Activated CD4-positive, alpha-beta T cell treated with anti-CD3 and anti-CD28 coated beads for 36 hours (primary cell): ENCODE measurements at regions of chr18 and their contacts with region 1.

Region 1: DNA sequence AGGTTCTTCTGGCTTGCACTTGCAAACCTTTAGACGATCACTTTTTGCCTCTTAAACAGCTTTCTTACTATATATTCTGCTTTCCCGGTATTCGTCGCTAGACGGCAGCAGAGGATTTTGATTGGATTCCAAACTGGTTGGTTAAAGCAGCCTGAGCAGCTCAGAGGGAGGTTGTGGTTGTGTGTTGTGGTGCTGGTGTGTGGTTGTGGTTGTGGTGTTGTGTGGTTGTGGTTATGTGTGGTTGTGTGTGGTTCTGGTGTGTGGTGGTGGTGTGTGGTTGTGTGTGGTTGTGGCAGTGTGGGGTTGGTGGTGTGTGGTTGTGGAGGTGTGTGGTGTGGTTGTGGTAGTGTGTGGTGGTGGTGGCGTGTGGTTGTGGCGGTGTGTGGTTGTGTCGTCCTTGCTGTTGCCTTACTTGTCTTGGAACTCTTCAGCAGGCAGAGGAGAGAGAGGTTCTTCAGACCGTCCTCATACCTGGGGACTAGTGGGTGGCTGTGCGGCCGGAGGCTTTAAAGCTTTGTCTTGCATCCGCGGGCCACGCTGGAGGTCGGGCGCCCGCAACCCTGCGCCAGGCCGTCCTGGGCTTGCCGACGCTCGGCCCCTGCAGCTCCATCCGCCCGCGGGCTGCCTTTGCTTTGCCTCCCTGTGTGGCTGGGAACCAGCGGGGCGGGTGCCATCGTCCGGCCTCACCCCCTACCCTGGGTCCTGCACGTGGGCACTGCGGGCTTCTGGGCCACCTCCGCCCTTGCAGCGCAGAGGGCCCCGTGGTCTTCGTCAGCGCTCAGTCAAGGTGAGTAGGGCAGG is 190.8 kb downstream of the ARHGAP28 start:
- DNase-seq: peak; percentile 57
- ATAC-seq: no peak
- H3K4me3 Mint-ChIP-seq: peak overlapping the region; percentile 12
- H3K27ac Mint-ChIP-seq: peak overlapping the region; percentile 53
- H3K4me1 Mint-ChIP-seq: no peaks in the 10 kb centered on the region
- H3K27me3 Mint-ChIP-seq: peaks cover 8% of the 10 kb centered on the region

Region 2: GRCh38 chr18:6659963-6660725 is 260.2 kb before region 1 on chr18:
- CTCF ChIA-PET with region 1: no interaction called
- POLR2A ChIA-PET with region 1: no interaction called
- intact Hi-C with region 1: no loop called
- DNase-seq: no peak
- ATAC-seq: no peak
- H3K4me3 Mint-ChIP-seq: no peak overlapping the region
- H3K27ac Mint-ChIP-seq: no peak overlapping the region
- H3K4me1 Mint-ChIP-seq: no peaks in the 10 kb centered on the region
- H3K27me3 Mint-ChIP-seq: no peaks in the 10 kb centered on the region

Region 3: GRCh38 chr18:7000484-7001096 is 80.3 kb after region 1 on chr18:
- CTCF ChIA-PET with region 1: no interaction called
- POLR2A ChIA-PET with region 1: no interaction called
- intact Hi-C with region 1: loop called in 1 of 2 experiments (anchors 2 kb)
- DNase-seq: no peak
- ATAC-seq: no peak
- H3K4me3 Mint-ChIP-seq: no peak overlapping the region
- H3K27ac Mint-ChIP-seq: no peak overlapping the region
- H3K4me1 Mint-ChIP-seq: no peaks in the 10 kb centered on the region
- H3K27me3 Mint-ChIP-seq: no peaks in the 10 kb centered on the region

Region 4: DNA sequence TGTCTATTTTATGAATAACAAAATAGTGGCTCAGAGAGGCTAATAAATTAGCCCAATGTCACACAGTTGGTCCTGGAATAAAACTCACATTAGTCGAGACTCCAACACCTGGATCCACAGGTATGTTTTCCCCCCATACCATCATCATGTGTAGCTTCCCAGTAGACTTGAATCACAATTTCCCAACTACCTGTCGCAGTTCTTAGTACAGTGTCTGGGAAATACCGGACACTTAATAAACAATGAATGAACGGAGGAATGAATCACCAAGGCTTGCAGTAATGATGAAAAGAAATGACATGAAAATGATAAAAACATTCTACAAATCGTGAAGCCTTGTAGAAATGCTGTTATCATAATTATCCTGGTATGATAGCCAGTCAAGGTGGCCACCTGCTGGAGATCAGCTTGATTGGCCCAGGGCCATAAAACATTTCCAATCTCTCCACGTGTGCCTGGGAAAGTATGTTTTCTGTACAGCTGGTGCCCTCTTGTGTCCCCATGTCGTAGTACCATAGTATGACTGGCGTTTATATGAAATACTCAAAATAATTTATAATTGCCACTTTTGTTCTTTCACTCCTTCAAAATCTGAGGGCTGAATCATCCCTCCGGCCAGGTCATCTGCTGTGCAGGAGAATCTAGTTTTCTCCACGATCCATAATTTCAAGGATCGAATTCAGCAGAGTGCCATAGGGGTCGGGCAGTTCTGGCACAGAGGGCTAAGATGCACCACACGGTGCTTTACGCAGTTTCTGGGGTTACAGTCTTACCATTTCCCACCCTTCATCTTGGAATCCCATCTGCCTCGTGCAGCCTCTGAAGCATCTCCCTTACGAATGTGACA is 101.9 kb after region 1 on chr18:
- CTCF ChIA-PET with region 1: no interaction called
- POLR2A ChIA-PET with region 1: no interaction called
- intact Hi-C with region 1: loop called in 1 of 2 experiments (anchors 1 kb)
- DNase-seq: peak; percentile 36
- ATAC-seq: peak; percentile 57
- H3K4me3 Mint-ChIP-seq: no peak overlapping the region
- H3K27ac Mint-ChIP-seq: no peak overlapping the region
- H3K4me1 Mint-ChIP-seq: no peaks in the 10 kb centered on the region
- H3K27me3 Mint-ChIP-seq: no peaks in the 10 kb centered on the region

Region 5: GRCh38 chr18:7177116-7177744 is 256.9 kb after region 1 on chr18:
- CTCF ChIA-PET with region 1: interaction called, 10 read pairs
- POLR2A ChIA-PET with region 1: no interaction called
- intact Hi-C with region 1: loop called (anchors 1 to 2 kb)
- DNase-seq: peak; percentile 45
- ATAC-seq: peak; percentile 36
- H3K4me3 Mint-ChIP-seq: no peak overlapping the region
- H3K27ac Mint-ChIP-seq: no peak overlapping the region
- H3K4me1 Mint-ChIP-seq: no peaks in the 10 kb centered on the region
- H3K27me3 Mint-ChIP-seq: no peaks in the 10 kb centered on the region